Mammary epithelial cell (primary cell): ENCODE measurements at regions of chr6 and their contacts with region 1.

Region 1: DNA sequence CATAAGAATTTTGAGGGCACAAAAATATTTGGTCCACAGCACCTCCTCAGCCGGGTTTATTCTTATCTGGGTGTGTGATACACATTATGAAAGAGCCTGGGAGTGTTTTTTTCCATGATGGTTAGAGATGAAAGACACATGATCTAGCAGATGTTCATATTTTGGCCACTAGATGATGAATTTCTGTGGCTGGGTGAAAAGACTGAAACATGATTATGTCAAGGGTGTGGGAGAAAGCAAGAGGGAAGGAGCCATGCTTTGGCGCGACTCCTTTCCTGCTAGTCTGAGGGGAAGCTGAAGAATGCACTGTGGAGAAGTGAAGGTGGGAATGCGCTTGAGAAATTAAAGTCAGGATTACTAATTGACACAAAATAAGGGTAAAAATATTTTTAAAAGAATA is 102.3 kb downstream of the SH3BGRL2 start:
- DNase-seq: no peak
- H3K4me3 ChIP-seq: no peak overlapping the region
- H3K27ac ChIP-seq: no peak overlapping the region
- H3K4me1 ChIP-seq: no peaks in the 10 kb centered on the region
- H3K27me3 ChIP-seq: peaks cover 2% of the 10 kb centered on the region
- CTCF ChIP-seq: no peak

Region 2: DNA sequence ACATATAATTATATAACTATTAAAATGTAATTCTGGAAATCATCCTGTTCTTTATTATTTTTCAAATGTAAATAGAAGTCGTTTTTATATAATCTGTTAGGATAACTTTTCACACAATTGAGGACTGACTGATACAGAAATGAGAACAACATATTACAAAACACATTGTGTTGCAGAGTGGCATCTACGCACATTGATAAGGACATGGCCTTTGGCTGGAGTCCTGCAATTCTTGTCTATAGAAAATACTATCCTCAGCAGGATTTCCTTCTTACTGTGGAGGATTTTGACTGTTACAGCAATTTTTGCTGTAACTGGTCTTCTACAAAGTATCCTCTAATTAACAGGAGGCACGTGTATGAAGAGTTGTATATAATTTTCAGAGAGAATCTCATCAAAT is 82.4 kb before region 1 on chr6:
- CTCF ChIA-PET with region 1: no interaction called
- dilution Hi-C with region 1: loop called (anchors 5 kb)
- in situ Hi-C with region 1: no loop called
- intact Hi-C with region 1: no loop called
- DNase-seq: no peak
- H3K4me3 ChIP-seq: no peak overlapping the region
- H3K27ac ChIP-seq: no peak overlapping the region
- H3K4me1 ChIP-seq: no peaks in the 10 kb centered on the region
- H3K27me3 ChIP-seq: no peaks in the 10 kb centered on the region
- CTCF ChIP-seq: no peak

Region 3: DNA sequence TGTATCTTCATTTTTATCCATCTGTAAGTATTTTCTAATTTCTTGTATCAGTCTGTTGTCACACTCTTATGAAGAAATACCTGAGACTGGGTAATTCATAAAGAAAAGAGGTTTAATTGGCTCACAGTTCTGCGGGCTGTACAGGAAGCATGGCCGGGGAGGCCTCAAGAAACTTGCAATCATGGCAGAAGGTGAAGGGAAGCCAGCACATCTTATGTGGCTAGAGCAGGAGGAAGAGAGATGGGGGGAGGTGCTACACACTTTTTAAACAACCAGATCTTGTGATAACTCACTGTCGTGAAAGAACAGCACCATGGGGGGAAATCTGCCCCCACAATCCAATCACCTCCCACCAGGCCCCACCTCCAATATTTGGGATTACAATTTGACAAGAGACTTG is 362.2 kb after region 1 on chr6:
- CTCF ChIA-PET with region 1: no interaction called
- dilution Hi-C with region 1: no loop called
- in situ Hi-C with region 1: no loop called
- intact Hi-C with region 1: no loop called
- DNase-seq: no peak
- H3K4me3 ChIP-seq: no peak overlapping the region
- H3K27ac ChIP-seq: no peak overlapping the region
- H3K4me1 ChIP-seq: no peaks in the 10 kb centered on the region
- H3K27me3 ChIP-seq: peaks cover 5% of the 10 kb centered on the region
- CTCF ChIP-seq: no peak